ENCODE measurements at regions of chr2 and their contacts with region 1.

Region 1: DNA sequence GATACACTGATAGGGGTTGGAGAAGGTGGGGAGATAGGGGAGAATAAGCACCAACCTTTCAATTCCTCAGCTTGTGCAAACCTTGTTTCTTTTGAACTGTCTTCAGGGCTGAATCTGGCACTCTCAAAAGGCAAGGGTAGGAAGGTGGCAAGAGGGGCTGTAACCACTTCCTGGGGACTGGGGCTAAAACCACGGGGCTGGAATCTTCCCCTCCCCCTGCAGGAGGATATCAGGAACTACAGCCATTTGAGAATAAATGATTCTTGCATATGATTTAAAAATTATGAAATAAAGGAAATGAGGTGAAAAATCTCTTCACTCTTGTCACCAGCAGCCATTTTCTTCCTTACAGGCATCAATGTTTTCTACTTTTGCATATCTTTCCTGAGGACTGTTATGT is 50.8 kb downstream of the ATOH8 start:
- DNase-seq: no peak
- ATAC-seq: peak in 1 of 4 donors; percentile 12
- H3K4me3 ChIP-seq: no peak overlapping the region
- H3K27ac ChIP-seq: no peak overlapping the region
- H3K4me1 ChIP-seq: peaks cover 0 to 9% (median 0%) of the 10 kb centered on the region in 12 donors
- H3K27me3 ChIP-seq: no peaks in the 10 kb centered on the region
- CTCF ChIP-seq: peak; percentile 46 to 69 (median 64)
- POLR2A ChIP-seq: no peak

Region 2: DNA sequence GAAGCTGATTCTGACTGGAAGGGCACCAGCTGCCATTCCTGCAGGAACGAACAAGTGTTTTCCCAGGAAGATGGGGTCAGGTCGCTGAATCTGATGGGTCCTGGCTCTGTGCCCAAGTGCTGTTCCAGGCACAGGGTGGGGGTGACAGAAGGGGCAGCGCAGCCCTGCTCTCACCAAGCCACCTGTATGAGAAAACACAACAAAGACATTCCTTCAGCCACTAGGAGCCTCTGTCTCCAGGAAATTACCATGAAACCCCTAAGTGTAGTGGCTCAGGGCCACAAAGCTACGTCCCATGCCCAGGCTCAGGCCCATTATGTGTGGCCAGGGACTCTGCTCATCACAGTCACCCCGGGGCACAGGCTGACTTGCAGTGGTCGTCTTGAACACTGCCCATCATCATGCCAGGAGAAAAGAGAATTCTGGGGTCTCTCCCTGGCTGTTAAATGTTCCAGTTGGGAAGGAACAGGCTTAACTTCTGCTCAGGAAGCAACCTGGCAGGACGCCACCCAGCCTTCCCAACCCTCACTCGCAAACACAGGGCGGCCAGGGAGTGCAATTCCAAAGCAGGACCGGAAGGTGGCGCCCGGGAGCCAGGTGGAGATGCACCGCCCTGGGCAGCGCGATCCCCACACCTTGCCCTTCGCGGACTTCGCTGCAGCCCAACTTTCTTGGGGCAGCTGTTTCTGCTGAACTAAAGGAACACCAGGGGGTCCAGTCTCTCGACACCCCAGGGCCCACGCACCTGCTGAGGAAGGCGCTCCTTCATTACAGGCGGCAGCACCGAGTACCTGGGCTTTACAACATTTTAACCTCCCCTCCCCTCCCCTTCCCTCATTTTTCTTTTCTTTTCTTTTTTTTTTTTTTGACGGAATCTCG is 125.5 kb before region 1 on chr2:
- intact Hi-C with region 1: no loop called
- DNase-seq: peak; percentile 87 to 95 (median 89)
- ATAC-seq: peak; percentile 86 to 95 (median 92)
- H3K4me3 ChIP-seq: peak overlapping the region in 1 of 12 donors; percentile 3
- H3K27ac ChIP-seq: peak overlapping the region in 11 of 12 donors; percentile 6 to 75 (median 47)
- H3K4me1 ChIP-seq: peaks cover 0 to 50% (median 18%) of the 10 kb centered on the region in 12 donors
- H3K27me3 ChIP-seq: no peaks in the 10 kb centered on the region
- CTCF ChIP-seq: peak; percentile 94 to 99 (median 99)
- POLR2A ChIP-seq: no peak

Region 3: DNA sequence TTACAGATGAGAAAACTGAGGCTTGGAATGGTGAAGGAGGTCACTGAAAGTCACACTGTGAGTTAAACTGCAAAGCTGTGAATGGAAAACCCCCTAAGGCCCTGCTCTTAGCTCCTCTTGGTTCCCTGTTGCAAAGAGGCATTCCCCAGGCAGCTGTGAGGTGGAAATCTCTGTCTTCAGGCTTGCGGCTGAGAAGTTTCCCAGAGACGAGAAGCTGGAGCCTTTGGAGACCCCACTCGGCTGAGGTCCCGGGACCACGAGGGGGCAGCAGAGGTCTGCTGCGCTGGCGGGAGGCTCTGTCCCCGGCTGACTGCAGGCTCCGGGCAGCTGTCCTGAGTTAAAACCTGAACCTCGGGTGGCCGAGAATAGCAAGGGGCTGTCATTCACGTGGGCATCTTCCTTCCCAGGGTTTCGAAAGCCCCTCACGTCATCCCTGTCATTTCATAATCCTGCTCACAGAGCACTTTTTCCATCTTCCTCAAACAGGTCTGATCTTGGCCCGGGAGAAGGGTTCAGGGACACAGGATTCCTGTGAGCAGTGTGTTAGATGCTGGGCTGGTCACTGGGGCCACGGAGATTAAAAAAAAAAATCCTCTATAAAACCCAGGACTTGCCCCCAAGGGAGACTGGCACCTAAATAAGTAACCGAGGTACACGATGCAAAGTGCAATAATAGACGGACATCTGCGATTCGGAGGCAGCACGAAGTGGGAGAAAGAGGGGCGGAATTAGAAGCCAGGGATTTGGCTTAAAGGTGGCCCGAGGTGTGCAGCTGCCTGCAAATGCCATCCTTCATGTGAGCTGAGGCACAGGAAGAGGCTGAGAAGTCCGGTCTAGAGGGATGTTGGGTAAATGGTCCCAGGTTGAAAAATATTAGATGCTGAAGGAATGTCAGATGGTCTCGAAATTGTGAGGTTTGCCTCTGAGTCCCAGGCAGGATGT is 75.4 kb before region 1 on chr2:
- intact Hi-C with region 1: loop called in 6 of 10 experiments (anchors 2 to 5 kb)
- DNase-seq: peak; percentile 89 to 95 (median 90)
- ATAC-seq: peak; percentile 89 to 95 (median 94)
- H3K4me3 ChIP-seq: no peak overlapping the region
- H3K27ac ChIP-seq: peak overlapping the region in 9 of 12 donors; percentile 15 to 71 (median 52)
- H3K4me1 ChIP-seq: peaks cover 0 to 47% (median 32%) of the 10 kb centered on the region in 12 donors
- H3K27me3 ChIP-seq: no peaks in the 10 kb centered on the region
- CTCF ChIP-seq: peak; percentile 90 to 99 (median 98)
- POLR2A ChIP-seq: no peak

Region 4: GRCh38 chr2:85865539-85866164 is 61.1 kb after region 1 on chr2:
- intact Hi-C with region 1: no loop called
- DNase-seq: no peak
- ATAC-seq: peak in 1 of 4 donors; percentile 10
- H3K4me3 ChIP-seq: no peak overlapping the region
- H3K27ac ChIP-seq: peak overlapping the region in 1 of 12 donors; percentile 37
- H3K4me1 ChIP-seq: peaks cover 0 to 49% (median 0%) of the 10 kb centered on the region in 12 donors
- H3K27me3 ChIP-seq: no peaks in the 10 kb centered on the region
- CTCF ChIP-seq: no peak
- POLR2A ChIP-seq: no peak

Measured in heart left ventricle (tissue), 16 donors.